AG04450 (cell line): ENCODE measurements at regions of chr4 and their contacts with region 1.

Region 1: DNA sequence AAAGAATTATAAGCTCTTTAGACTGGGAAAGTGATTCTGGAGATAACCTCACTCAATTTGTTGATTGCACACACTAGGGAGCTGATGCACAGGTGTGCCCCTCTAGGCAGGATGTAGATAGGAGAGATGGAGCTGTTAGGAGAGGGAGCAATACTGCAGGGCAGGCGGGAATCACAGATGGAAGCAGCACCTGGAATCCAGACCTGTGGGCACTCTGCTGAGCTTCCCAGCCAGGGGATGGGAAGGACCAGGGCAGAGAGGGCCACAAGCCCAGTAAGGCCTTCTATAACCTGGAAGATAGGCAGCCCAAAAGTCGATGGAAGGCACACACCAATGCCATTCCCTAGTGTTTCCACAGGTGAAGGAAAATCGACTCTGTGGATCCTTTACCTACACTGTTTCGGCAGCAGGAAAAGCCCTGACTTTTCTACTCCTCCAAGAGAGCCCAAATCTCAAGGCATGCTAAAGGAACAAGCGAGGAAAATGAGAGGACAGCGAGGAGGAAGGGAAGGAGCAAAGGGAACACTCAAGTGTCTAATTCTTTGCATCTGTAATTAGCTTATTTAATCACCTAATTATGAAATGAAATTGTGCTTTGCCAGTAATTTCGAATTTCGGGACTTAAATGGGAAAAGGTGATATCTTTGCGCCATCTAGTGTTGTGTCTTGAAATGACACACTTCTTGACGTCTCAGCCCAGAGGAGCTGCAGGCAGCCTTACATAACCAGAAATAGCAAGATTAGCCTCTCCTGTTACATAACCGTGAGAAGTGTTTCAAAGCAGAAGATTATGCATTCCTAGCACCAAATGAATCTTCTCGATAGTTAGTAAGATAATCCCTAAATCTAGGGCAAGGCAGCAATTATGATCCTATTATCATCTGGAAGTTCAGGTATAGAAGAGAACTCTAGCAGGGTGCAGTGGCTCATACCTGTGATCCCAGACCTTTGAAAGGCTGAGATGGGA is 31.0 kb upstream of the TLR3 start:
- DNase-seq: peak; percentile 60
- H3K4me3 ChIP-seq: no peak overlapping the region
- H3K27ac ChIP-seq: no peak overlapping the region
- H3K27me3 ChIP-seq: no peaks in the 10 kb centered on the region
- CTCF ChIP-seq: peak; percentile 72

Region 2: DNA sequence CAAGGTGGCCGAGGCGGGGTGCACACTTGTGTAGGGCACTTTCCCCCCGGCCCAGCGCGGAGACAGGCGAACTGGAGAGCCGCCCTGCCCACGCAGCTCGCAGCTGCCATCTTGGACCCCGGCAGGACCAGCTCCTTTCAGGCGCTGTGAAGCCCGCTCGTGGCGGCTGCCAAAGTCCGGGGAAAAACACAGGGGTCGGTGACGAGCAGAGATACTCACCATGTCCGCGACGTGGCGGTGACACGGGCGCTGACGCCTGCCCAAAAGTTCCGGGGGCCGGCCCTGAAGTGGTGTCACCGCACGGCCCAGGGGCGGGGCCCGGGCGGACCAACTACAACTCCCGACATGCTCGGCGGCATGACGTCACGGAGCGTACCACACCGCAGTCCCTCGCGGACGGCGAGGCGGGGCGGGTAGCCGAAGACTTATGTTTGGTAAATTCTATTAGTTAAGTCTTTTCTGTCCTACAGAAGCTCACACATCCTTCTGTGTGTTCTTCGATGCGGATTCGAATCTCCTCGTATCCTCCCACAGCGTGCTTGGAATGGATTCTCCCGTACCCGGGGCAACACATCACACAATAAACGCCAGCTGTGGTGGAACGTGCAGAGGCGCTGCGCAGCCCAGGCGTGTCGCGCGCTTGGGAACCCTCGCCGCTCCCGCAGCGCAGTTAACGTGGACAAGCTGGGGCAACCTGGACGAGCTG is 612.2 kb before region 1 on chr4 and contains the start of gene UFSP2:
- CTCF ChIA-PET with region 1: interaction called, 10 read pairs
- POLR2A ChIA-PET with region 1: no interaction called
- DNase-seq: peak; percentile 70
- H3K4me3 ChIP-seq: peak within 1 kb of the TSS; percentile 85
- H3K27ac ChIP-seq: peak within 1 kb of the TSS; percentile 98
- H3K27me3 ChIP-seq: no peaks in the 10 kb centered on the region
- CTCF ChIP-seq: no peak
- polyA plus RNA-seq, gene UFSP2: 41.2 and 54.1 TPM in 2 replicates

Region 3: DNA sequence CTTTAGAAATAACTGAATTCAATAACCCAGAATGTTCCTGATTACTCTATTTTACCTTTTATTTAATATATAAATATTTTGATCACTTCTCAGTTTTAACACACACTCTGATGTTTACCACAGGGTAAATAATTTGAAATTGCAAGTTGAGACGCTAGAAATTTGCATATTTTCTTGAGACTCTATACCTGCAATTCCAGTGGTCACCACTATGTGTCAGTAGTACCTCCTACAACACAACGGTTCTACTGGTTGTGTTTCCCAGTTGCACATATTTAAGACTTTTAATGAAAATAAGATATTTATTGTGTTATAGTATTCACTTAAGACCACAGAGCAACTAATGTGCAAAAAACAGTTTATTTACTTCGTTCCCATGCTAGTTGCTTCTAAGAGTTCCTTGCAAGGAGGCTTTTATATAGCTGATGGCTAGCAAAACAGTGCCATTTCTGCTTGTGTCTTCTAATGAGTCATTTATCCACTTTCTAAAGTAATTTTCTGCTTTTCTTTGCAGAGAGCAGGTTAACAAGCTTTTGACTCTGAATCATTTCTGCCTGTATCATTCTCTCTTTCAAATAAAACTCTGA is 403.8 kb before region 1 on chr4:
- CTCF ChIA-PET with region 1: interaction called, 150 read pairs
- POLR2A ChIA-PET with region 1: no interaction called
- DNase-seq: no peak
- H3K4me3 ChIP-seq: no peak overlapping the region
- H3K27ac ChIP-seq: no peak overlapping the region
- H3K27me3 ChIP-seq: peaks cover 8% of the 10 kb centered on the region
- CTCF ChIP-seq: peak; percentile 33; the same call in 1 of the 2 replicates

Region 4: GRCh38 chr4:185640811-185641675 is 396.9 kb before region 1 on chr4:
- CTCF ChIA-PET with region 1: interaction called, 150 read pairs
- POLR2A ChIA-PET with region 1: no interaction called
- DNase-seq: peak; percentile 41
- H3K4me3 ChIP-seq: no peak overlapping the region
- H3K27ac ChIP-seq: no peak overlapping the region
- H3K27me3 ChIP-seq: peaks cover 21% of the 10 kb centered on the region
- CTCF ChIP-seq: peak; percentile 51

Region 5: DNA sequence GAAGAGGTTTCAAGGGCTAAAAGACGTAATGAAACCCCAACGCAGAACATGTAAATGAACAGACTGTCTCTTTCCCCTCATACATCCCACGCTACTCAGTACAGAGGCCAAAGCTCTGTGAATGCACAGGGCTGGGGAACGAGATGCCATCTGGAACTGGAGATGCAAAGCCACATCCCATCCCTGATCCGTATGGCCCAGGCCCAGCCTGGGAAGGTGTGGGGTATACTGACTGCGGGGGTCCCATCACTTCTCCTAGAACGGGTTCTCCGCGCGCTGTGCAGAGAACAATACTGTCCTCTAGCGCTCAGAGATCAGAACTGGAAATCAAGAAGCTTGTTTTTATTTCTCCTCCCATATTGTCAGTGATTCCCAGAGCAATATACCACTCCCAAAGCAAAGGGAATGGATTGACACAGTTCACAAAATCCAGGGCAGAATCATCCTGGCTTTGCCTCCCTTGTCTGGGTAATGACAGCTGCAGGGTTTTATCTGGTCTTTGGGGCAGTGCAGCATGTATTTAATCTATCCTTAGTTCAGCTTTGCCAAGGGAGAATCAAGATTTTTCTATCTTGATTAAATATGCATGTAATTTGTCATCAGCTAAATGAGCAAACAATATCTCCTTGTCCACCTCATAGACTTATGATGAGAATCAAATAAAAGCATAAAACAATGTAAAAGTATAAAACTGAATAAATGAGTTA is 16.4 kb before region 1 on chr4:
- CTCF ChIA-PET with region 1: interaction called, 28 read pairs
- POLR2A ChIA-PET with region 1: no interaction called
- DNase-seq: no peak
- H3K4me3 ChIP-seq: no peak overlapping the region
- H3K27ac ChIP-seq: no peak overlapping the region
- H3K27me3 ChIP-seq: no peaks in the 10 kb centered on the region
- CTCF ChIP-seq: peak; percentile 86

Region 6: GRCh38 chr4:186137196-186137794 is 99.3 kb after region 1 on chr4:
- CTCF ChIA-PET with region 1: interaction called, 14 read pairs
- POLR2A ChIA-PET with region 1: no interaction called
- DNase-seq: no peak
- H3K4me3 ChIP-seq: no peak overlapping the region
- H3K27ac ChIP-seq: no peak overlapping the region
- H3K27me3 ChIP-seq: no peaks in the 10 kb centered on the region
- CTCF ChIP-seq: peak; percentile 56